ENCODE measurements at regions of chr17 and their contacts with region 1.

Region 1: GRCh38 chr17:2244545-2245525 is 58.8 kb downstream of the SMG6 start:
- DNase-seq: peak; percentile 84 to 94
- ATAC-seq: peak; percentile 98 to 99
- H3K4me3 ChIP-seq: no peak overlapping the region
- H3K27ac ChIP-seq: no peak overlapping the region
- H3K4me1 ChIP-seq: peaks cover 16% of the 10 kb centered on the region
- CTCF ChIP-seq: peak; percentile 99
- EP300 ChIP-seq: no peak; a peak in 1 of 5 replicates
- POLR2A ChIP-seq: no peak
- RAD21 ChIP-seq: peak; percentile 98 to 99

Region 2: GRCh38 chr17:2041561-2042366 is 203.1 kb before region 1 on chr17 and contains the start of gene OVCA2:
- CTCF ChIA-PET with region 1: interaction called, 37 read pairs
- POLR2A ChIA-PET with region 1: no interaction called
- DNase-seq: peak; percentile 94 to 96
- ATAC-seq: peak; percentile 82 to 91
- H3K4me3 ChIP-seq: peak within 1 kb of the TSS; percentile 85
- H3K27ac ChIP-seq: peak within 1 kb of the TSS; percentile 93 to 99
- H3K4me1 ChIP-seq: peaks cover 24% of the 10 kb centered on the region
- CTCF ChIP-seq: peak; percentile 47
- EP300 ChIP-seq: no peak
- POLR2A ChIP-seq: peak; percentile 71
- RAD21 ChIP-seq: peak; percentile 56 to 61
- polyA plus RNA-seq, gene OVCA2: 66.3 and 73.1 TPM in 2 replicates

Region 3: GRCh38 chr17:2087597-2088211 is 157.1 kb before region 1 on chr17:
- CTCF ChIA-PET with region 1: interaction called, 55 read pairs
- POLR2A ChIA-PET with region 1: no interaction called
- DNase-seq: no peak
- ATAC-seq: no peak
- H3K4me3 ChIP-seq: no peak overlapping the region
- H3K27ac ChIP-seq: no peak overlapping the region
- H3K4me1 ChIP-seq: peaks cover 27% of the 10 kb centered on the region
- CTCF ChIP-seq: no peak
- EP300 ChIP-seq: no peak
- POLR2A ChIP-seq: no peak
- RAD21 ChIP-seq: no peak

Region 4: DNA sequence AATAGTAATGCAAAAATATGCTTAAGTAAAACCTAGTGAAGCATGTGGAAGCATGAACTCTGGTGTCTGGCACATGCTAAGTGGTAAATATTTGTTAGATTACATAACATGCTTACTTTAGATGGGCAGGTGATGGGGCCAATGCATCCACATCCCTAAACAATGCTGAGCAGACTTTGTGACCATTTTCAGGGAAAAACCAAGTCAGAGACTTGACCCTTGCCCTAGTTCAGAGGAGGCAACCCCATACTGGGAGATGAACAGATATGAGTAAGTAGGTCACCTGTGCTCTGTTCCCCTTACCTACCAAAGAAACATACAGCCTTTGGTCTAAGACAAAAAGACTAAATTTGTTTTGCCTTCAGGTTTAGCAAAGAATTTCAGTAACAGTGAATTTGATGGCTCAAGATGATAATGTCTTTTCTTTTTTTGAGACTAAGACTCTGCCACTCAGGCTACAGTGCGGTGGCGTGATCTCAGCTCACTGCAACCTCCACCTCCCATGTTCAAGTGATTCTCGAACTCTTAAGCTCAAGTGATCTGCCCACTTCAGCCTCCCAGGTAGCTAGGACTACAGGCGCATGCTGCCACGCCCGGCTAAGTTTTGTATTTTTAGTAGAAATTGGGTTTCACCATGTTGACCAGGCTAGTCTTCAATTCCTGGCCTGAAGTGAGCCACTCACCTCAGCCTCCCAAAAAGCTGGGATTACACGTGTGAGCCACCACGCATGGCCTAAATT is 98.5 kb before region 1 on chr17:
- CTCF ChIA-PET with region 1: interaction called, 20 read pairs
- POLR2A ChIA-PET with region 1: interaction called, 12 read pairs
- DNase-seq: no peak
- ATAC-seq: no peak
- H3K4me3 ChIP-seq: no peak overlapping the region
- H3K27ac ChIP-seq: no peak overlapping the region
- H3K4me1 ChIP-seq: peaks cover 4% of the 10 kb centered on the region; the same call in 1 of the 3 replicates
- CTCF ChIP-seq: no peak
- EP300 ChIP-seq: no peak
- POLR2A ChIP-seq: no peak
- RAD21 ChIP-seq: no peak

Region 5: GRCh38 chr17:2207815-2208515 is 36.9 kb before region 1 on chr17:
- CTCF ChIA-PET with region 1: interaction called, 23 read pairs
- POLR2A ChIA-PET with region 1: no interaction called
- DNase-seq: no peak
- ATAC-seq: no peak
- H3K4me3 ChIP-seq: no peak overlapping the region
- H3K27ac ChIP-seq: no peak overlapping the region
- H3K4me1 ChIP-seq: no peaks in the 10 kb centered on the region
- CTCF ChIP-seq: no peak
- EP300 ChIP-seq: no peak
- POLR2A ChIP-seq: no peak
- RAD21 ChIP-seq: no peak

Region 6: DNA sequence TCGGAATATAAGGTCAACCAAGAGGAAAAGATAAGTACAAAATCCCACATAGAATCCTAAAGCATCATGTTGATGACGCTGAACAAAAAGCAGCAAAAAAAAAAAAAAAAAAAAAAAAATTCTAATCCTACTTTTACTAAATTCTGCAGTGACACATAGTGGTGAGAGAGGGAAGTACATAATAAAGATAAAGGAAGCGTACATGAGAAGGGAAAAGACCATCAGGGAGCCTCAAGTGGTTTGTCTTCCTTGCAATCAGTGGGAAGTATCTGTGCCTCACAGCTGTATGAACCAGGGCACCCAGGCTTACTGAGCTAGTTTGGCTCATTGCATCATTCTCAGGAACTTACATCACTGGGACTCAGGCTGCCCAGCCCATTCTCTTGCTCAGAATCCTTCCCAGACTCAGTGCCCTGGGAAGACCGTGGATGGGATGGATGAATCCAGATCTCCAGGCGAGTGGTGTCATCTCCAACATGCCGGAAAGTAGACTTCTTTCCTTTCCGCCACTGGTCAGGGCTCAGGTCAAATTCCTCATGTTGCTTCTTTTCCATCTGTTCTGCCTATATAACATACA is 37.5 kb after region 1 on chr17:
- CTCF ChIA-PET with region 1: interaction called, 62 read pairs
- POLR2A ChIA-PET with region 1: no interaction called
- DNase-seq: peak; percentile 67 to 78
- ATAC-seq: peak; percentile 84 to 89
- H3K4me3 ChIP-seq: no peak overlapping the region
- H3K27ac ChIP-seq: no peak overlapping the region
- H3K4me1 ChIP-seq: no peaks in the 10 kb centered on the region
- CTCF ChIP-seq: peak; percentile 71
- EP300 ChIP-seq: no peak
- POLR2A ChIP-seq: no peak
- RAD21 ChIP-seq: peak; percentile 63 to 65

Region 7: GRCh38 chr17:2406903-2407790 is 162.3 kb after region 1 on chr17:
- CTCF ChIA-PET with region 1: no interaction called
- POLR2A ChIA-PET with region 1: no interaction called
- DNase-seq: peak; percentile 75 to 89
- ATAC-seq: peak; percentile 81 to 85
- H3K4me3 ChIP-seq: no peak overlapping the region
- H3K27ac ChIP-seq: peak overlapping the region; percentile 69 to 89
- H3K4me1 ChIP-seq: peaks cover 54% of the 10 kb centered on the region
- CTCF ChIP-seq: no peak
- EP300 ChIP-seq: no peak
- POLR2A ChIP-seq: no peak
- RAD21 ChIP-seq: no peak

Measured in A549 (cell line).